Endothelial cell of umbilical vein (primary cell): ENCODE measurements at regions of chr6 and their contacts with region 1.

Region 1: GRCh38 chr6:81766482-81767069 is 14.1 kb upstream of the TENT5A start:
- DNase-seq: peak; percentile 92
- H3K4me3 ChIP-seq: no peak overlapping the region
- H3K27ac ChIP-seq: no peak overlapping the region
- H3K4me1 ChIP-seq: peaks cover 12% of the 10 kb centered on the region
- H3K27me3 ChIP-seq: peaks cover 28 to 46% of the 10 kb centered on the region in 2 experiments
- CTCF ChIP-seq: no peak
- POLR2A ChIP-seq: no peak

Region 2: GRCh38 chr6:81793821-81794475 is 27.4 kb after region 1 on chr6:
- CTCF ChIA-PET with region 1: no interaction called
- POLR2A ChIA-PET with region 1: no interaction called
- dilution Hi-C with region 1: no loop called
- intact Hi-C with region 1: loop called (anchors 2 kb)
- DNase-seq: no peak
- H3K4me3 ChIP-seq: no peak overlapping the region
- H3K27ac ChIP-seq: no peak overlapping the region
- H3K4me1 ChIP-seq: peaks cover 24% of the 10 kb centered on the region
- H3K27me3 ChIP-seq: no peaks in the 10 kb centered on the region
- CTCF ChIP-seq: no peak
- POLR2A ChIP-seq: no peak

Region 3: GRCh38 chr6:81831274-81831673 is 64.7 kb after region 1 on chr6:
- CTCF ChIA-PET with region 1: no interaction called
- POLR2A ChIA-PET with region 1: no interaction called
- dilution Hi-C with region 1: no loop called
- intact Hi-C with region 1: no loop called
- DNase-seq: no peak
- H3K4me3 ChIP-seq: no peak overlapping the region
- H3K27ac ChIP-seq: no peak overlapping the region
- H3K4me1 ChIP-seq: no peaks in the 10 kb centered on the region
- H3K27me3 ChIP-seq: no peaks in the 10 kb centered on the region
- CTCF ChIP-seq: no peak
- POLR2A ChIP-seq: no peak

Region 4: GRCh38 chr6:81853982-81854381 is 87.4 kb after region 1 on chr6:
- CTCF ChIA-PET with region 1: no interaction called
- POLR2A ChIA-PET with region 1: no interaction called
- dilution Hi-C with region 1: no loop called
- intact Hi-C with region 1: loop called (anchors 1 kb)
- DNase-seq: no peak
- H3K4me3 ChIP-seq: no peak overlapping the region
- H3K27ac ChIP-seq: peak overlapping the region; percentile 34
- H3K4me1 ChIP-seq: peaks cover 16% of the 10 kb centered on the region
- H3K27me3 ChIP-seq: no peaks in the 10 kb centered on the region
- CTCF ChIP-seq: no peak
- POLR2A ChIP-seq: no peak

Region 5: DNA sequence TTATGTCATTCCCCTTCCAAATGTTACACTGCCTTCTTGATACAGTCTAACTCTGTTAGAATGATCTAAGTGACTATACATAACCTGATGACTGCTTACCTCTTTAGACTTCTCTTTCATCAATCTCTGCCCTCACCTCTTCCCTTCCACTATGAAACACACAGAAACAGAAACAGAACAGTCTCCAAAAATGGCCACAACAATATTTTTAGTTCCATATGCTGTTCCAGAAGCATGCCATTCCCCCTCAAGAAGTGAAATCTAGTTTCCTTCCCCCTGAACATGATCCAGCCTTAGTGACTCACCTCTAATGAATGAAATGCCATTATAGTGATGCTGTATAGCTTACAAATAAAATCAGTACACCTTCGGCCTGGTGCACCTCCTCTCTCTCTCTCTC is 215.2 kb after region 1 on chr6:
- CTCF ChIA-PET with region 1: no interaction called
- POLR2A ChIA-PET with region 1: no interaction called
- dilution Hi-C with region 1: no loop called
- intact Hi-C with region 1: loop called (anchors 2 kb)
- DNase-seq: peak; percentile 68
- H3K4me3 ChIP-seq: no peak overlapping the region
- H3K27ac ChIP-seq: peak overlapping the region; percentile 66
- H3K4me1 ChIP-seq: peaks cover 15% of the 10 kb centered on the region
- H3K27me3 ChIP-seq: no peaks in the 10 kb centered on the region
- CTCF ChIP-seq: no peak
- POLR2A ChIP-seq: no peak